Activated CD4-positive, alpha-beta T cell treated with anti-CD3 and anti-CD28 coated beads for 36 hours (primary cell): ENCODE measurements at regions of chr6 and their contacts with region 1.

Region 1: DNA sequence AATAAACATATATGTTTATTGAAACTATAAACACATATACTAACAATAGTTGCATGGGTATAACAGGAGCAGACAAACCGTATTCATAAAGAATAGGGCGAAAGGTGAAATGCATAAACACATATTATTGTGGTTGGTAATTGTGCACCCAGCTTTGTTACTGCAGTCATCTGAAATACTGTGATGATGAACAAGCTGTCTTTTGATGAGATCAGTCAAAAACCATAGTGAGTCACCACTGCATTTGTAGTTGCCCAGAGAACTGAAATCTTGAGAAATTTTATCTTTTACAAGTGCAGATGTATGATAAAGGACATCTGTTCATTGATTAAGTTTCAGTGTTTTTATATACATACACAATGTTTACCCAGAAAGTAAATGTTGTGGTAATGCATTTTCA is 133.7 kb downstream of the MYO6 start:
- DNase-seq: no peak
- ATAC-seq: peak; percentile 30
- H3K4me3 Mint-ChIP-seq: no peak overlapping the region
- H3K27ac Mint-ChIP-seq: no peak overlapping the region
- H3K4me1 Mint-ChIP-seq: no peaks in the 10 kb centered on the region
- H3K27me3 Mint-ChIP-seq: no peaks in the 10 kb centered on the region

Region 2: DNA sequence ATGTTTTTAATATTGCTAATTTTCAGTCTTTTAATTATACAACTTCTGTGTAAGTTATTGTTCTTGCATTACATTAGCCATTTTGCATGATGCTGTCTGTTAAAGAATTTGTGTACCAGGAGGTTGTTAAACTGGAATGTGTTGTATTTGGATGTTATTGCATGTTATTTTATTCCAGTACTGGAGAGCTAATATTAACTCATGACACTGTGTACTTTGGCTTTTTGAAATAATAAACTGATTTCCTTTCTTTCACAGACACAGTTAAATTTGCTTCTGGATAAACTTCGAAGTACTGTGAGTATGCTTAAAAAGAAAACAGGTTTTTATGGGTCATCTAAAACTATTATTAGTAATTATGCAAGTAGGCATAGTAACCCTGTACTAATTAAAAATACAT is 12.3 kb before region 1 on chr6:
- CTCF ChIA-PET with region 1: interaction called, 10 read pairs
- POLR2A ChIA-PET with region 1: no interaction called
- intact Hi-C with region 1: no loop called
- DNase-seq: no peak
- ATAC-seq: no peak
- H3K4me3 Mint-ChIP-seq: no peak overlapping the region
- H3K27ac Mint-ChIP-seq: no peak overlapping the region
- H3K4me1 Mint-ChIP-seq: no peaks in the 10 kb centered on the region
- H3K27me3 Mint-ChIP-seq: peaks cover 2% of the 10 kb centered on the region

Region 3: GRCh38 chr6:75913040-75913439 is 30.3 kb after region 1 on chr6:
- CTCF ChIA-PET with region 1: no interaction called
- POLR2A ChIA-PET with region 1: no interaction called
- intact Hi-C with region 1: no loop called
- DNase-seq: no peak
- ATAC-seq: no peak
- H3K4me3 Mint-ChIP-seq: no peak overlapping the region
- H3K27ac Mint-ChIP-seq: no peak overlapping the region
- H3K4me1 Mint-ChIP-seq: no peaks in the 10 kb centered on the region
- H3K27me3 Mint-ChIP-seq: peaks cover 5% of the 10 kb centered on the region